ENCODE measurements at regions of chr7 and their contacts with region 1.

Region 1: DNA sequence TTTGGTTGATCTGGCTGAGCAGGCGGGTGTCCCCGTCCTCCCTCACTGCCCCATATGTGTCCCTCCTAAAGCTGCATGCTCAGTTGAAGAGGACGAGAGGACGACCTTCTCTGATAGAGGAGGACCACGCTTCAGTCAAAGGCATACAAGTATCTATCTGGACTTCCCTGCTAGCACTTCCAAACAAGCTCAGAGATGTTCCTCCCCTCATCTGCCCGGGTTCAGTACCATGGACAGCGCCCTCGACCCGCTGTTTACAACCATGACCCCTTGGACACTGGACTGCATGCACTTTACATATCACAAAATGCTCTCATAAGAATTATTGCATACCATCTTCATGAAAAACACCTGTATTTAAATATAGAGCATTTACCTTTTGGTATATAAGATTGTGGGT is 26.9 kb upstream of the TRIM56 start:
- DNase-seq: no peak
- H3K4me3 ChIP-seq: no peak overlapping the region
- CTCF ChIP-seq: no peak

Region 2: DNA sequence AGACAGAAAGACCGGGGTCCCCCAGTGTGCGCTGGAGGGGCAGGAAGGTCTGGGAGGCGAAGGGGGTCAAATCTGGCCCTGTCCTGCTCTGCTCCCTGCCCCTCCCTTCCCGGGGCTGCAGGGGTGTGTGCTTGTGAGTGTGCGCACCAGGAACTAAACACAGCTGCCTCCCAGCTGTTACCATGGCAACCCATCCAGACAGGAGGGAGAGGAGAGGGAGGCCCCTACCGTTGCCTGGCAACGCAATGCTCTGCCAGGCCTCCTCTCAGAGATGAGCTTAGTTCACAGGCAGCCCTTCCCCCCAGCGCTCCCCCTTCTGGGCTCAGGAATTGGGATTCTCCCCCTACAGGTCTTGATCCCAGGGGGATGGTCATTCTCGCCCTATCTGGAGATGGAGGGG is 568.5 kb before region 1 on chr7:
- CTCF ChIA-PET with region 1: no interaction called
- POLR2A ChIA-PET with region 1: no interaction called
- DNase-seq: peak; percentile 51
- H3K4me3 ChIP-seq: no peak overlapping the region
- CTCF ChIP-seq: no peak

Region 3: DNA sequence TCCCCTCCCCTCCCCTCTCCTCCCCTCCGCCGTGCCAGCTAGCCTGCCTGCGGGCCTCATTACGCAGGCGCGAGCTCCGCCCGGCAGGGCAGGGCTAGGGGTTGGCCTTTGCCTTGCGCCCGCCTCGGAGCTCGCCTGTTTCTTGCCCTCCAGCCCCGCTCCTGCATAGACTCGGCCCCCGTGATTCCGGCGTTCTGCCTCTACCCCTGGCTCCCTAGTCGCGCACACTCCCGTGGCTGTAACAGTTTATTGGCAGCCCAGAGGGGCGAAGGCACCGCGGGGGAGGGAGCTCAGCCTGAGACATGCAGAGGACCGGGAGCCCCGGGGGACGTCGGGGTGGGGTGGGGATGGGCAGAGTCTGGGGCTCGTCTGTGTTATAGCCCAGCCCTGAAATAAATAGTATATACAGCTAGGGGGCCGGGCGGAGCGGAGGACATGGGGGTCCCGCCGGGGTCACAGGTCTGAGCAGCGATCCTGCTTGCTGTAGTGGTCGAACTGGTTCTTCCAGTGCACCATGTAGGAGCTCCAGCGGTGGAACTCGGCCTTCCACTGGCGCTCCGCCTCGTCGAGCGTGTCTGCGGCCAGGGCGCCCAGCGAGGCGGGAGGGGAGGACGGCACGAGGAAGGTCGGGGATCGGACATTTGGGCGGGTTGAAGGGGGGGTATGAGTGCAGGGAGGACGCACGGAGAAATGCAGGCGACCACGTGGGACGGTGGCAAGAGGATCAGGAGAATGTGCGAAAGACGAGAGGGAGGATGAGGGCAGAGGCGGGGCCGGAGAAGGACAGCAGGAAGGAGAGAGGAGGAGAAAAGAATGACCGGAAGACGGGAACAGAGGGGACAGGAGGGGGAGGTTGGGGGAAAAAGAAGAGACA is 168.4 kb before region 1 on chr7:
- CTCF ChIA-PET with region 1: interaction called, 45 read pairs
- POLR2A ChIA-PET with region 1: interaction called, 3 read pairs
- DNase-seq: no peak
- H3K4me3 ChIP-seq: peak overlapping the region; percentile 63
- CTCF ChIP-seq: no peak

Region 4: GRCh38 chr7:100896732-100897608 is 161.4 kb before region 1 on chr7:
- CTCF ChIA-PET with region 1: interaction called, 105 read pairs
- POLR2A ChIA-PET with region 1: no interaction called
- DNase-seq: no peak
- H3K4me3 ChIP-seq: peak overlapping the region; percentile 34; the same call in 1 of the 2 replicates
- CTCF ChIP-seq: peak; percentile 84

Measured in AG04449 (cell line).